ENCODE measurements at regions of chr1 and their contacts with region 1.

Region 1: DNA sequence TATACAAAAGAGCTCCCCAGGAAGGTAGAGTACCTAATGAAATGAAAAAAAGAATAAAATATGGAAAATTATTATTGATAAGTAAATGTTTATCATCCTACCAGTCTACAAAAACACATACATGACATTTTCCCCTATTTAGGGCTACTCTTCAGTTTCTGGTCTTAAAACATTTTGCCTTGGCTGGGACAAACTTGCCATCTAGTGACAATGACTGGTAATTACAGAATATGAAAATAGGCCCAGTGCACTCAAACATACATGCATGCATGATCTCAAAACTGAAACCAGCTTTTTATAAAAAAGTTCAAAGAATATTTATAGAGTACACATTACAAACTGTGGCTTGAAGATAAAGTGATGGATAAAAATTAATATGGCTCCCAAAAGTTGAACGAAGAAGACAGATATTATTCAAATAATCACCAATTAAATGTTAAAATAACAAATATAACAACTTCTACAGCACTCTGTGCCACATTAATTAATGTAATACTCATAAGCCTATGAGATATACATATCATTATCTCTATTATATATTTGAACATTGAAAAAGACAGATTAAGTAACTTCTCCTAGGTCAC is 10.5 kb upstream of the RNPC3 start:
- DNase-seq: peak in 5 of 14 experiments; percentile 11 to 75 (median 71)
- ATAC-seq: peak; percentile 95
- H3K4me3 ChIP-seq: no peak overlapping the region
- H3K4me3 Mint-ChIP-seq: no peak overlapping the region
- H3K27ac ChIP-seq: no peak overlapping the region
- H3K27ac Mint-ChIP-seq: no peak overlapping the region
- H3K4me1 ChIP-seq: no peaks in the 10 kb centered on the region
- H3K4me1 Mint-ChIP-seq: peaks cover 4% of the 10 kb centered on the region
- H3K27me3 ChIP-seq: no peaks in the 10 kb centered on the region
- H3K27me3 Mint-ChIP-seq: no peaks in the 10 kb centered on the region
- CTCF ChIP-seq: peak; percentile 87

Region 2: DNA sequence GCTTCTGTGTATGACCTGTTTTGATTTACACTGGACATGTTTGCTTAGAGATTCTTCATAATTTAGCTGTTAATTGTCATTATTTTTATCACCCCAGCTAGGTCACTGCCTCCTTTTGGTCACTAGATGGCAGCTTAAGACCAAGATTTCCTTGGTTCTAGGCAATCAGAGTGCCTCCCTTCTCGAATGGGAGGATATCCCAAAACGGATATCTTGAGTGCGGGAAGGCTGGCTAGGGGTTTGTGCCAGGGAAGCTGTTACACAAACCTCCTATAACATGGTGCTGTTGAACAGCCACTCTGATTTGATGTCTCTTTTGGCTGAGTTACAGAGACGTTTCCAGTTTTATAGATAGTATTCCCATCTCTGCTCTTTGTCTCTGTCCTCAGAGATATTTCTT is 1994.7 kb before region 1 on chr1:
- CTCF ChIA-PET with region 1: interaction called, 4 read pairs
- POLR2A ChIA-PET with region 1: no interaction called
- intact Hi-C with region 1: loop called in 1 of 2 experiments (anchors 5 kb)
- DNase-seq: peak in 3 of 14 experiments; percentile 36 to 53 (median 53)
- ATAC-seq: peak; percentile 34
- H3K4me3 ChIP-seq: no peak overlapping the region
- H3K4me3 Mint-ChIP-seq: no peak overlapping the region
- H3K27ac ChIP-seq: no peak overlapping the region
- H3K27ac Mint-ChIP-seq: no peak overlapping the region
- H3K4me1 ChIP-seq: no peaks in the 10 kb centered on the region
- H3K4me1 Mint-ChIP-seq: peaks cover 6% of the 10 kb centered on the region
- H3K27me3 ChIP-seq: no peaks in the 10 kb centered on the region
- H3K27me3 Mint-ChIP-seq: no peaks in the 10 kb centered on the region
- CTCF ChIP-seq: peak; percentile 49

Region 3: DNA sequence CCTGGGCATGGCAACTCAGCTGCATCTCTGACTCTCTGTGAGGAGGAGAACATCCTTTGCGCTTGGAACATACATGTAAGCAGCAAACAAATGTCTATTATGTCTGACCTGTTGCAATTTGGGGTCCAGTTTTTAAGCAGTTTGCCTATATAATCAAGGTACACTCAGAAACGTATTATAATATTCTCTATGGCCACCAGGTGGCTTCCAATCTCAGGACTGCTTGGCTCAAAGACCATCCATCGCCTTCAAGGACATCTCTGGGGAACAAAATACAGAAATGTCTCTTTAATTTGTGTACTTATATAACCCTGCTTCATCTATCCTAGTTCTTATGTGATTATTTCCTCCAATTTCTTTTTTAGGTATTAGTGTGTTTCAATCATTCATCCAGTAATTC is 1745.5 kb before region 1 on chr1:
- CTCF ChIA-PET with region 1: no interaction called
- POLR2A ChIA-PET with region 1: no interaction called
- intact Hi-C with region 1: loop called in 1 of 2 experiments (anchors 10 kb)
- DNase-seq: peak in 2 of 14 experiments; percentile 1 to 2
- ATAC-seq: no peak
- H3K4me3 ChIP-seq: no peak overlapping the region
- H3K4me3 Mint-ChIP-seq: no peak overlapping the region
- H3K27ac ChIP-seq: no peak overlapping the region
- H3K27ac Mint-ChIP-seq: no peak overlapping the region
- H3K4me1 ChIP-seq: no peaks in the 10 kb centered on the region
- H3K4me1 Mint-ChIP-seq: no peaks in the 10 kb centered on the region
- H3K27me3 ChIP-seq: no peaks in the 10 kb centered on the region
- H3K27me3 Mint-ChIP-seq: peaks cover 19% of the 10 kb centered on the region
- CTCF ChIP-seq: no peak

Region 4: GRCh38 chr1:103525607-103526507 is 10.8 kb after region 1 on chr1 and contains the start of gene RNPC3:
- CTCF ChIA-PET with region 1: interaction called, 14 read pairs
- POLR2A ChIA-PET with region 1: interaction called, 16 read pairs
- intact Hi-C with region 1: no loop called
- DNase-seq: peak; percentile 78 to 93 (median 86)
- ATAC-seq: peak; percentile 77
- H3K4me3 ChIP-seq: peak within 1 kb of the TSS; percentile 71
- H3K4me3 Mint-ChIP-seq: peak within 1 kb of the TSS; percentile 99
- H3K27ac ChIP-seq: peak within 1 kb of the TSS; percentile 91 to 96
- H3K27ac Mint-ChIP-seq: peak within 1 kb of the TSS; percentile 98
- H3K4me1 ChIP-seq: peaks cover 11% of the 10 kb centered on the region
- H3K4me1 Mint-ChIP-seq: peaks cover 56% of the 10 kb centered on the region
- H3K27me3 ChIP-seq: no peaks in the 10 kb centered on the region
- H3K27me3 Mint-ChIP-seq: no peaks in the 10 kb centered on the region
- CTCF ChIP-seq: no peak
- total RNA-seq, gene RNPC3: 48.6 to 52.5 TPM

Region 5: GRCh38 chr1:104807531-104807930 is 1292.5 kb after region 1 on chr1:
- CTCF ChIA-PET with region 1: no interaction called
- POLR2A ChIA-PET with region 1: no interaction called
- intact Hi-C with region 1: no loop called
- DNase-seq: no peak
- ATAC-seq: no peak
- H3K4me3 ChIP-seq: no peak overlapping the region
- H3K4me3 Mint-ChIP-seq: no peak overlapping the region
- H3K27ac ChIP-seq: no peak overlapping the region
- H3K27ac Mint-ChIP-seq: no peak overlapping the region
- H3K4me1 ChIP-seq: no peaks in the 10 kb centered on the region
- H3K4me1 Mint-ChIP-seq: no peaks in the 10 kb centered on the region
- H3K27me3 ChIP-seq: no peaks in the 10 kb centered on the region
- H3K27me3 Mint-ChIP-seq: no peaks in the 10 kb centered on the region
- CTCF ChIP-seq: no peak

Measured in CD4-positive, alpha-beta T cell (primary cell).